ENCODE measurements at regions of chr2 and their contacts with region 1.

Region 1: GRCh38 chr2:215269397-215270119 is 42.3 kb upstream of the ATIC start:
- DNase-seq: peak; percentile 71
- ATAC-seq: no peak
- H3K4me3 Mint-ChIP-seq: no peak overlapping the region
- H3K27ac Mint-ChIP-seq: no peak overlapping the region
- H3K4me1 Mint-ChIP-seq: peaks cover 15% of the 10 kb centered on the region
- H3K27me3 Mint-ChIP-seq: peaks cover 3% of the 10 kb centered on the region

Region 2: DNA sequence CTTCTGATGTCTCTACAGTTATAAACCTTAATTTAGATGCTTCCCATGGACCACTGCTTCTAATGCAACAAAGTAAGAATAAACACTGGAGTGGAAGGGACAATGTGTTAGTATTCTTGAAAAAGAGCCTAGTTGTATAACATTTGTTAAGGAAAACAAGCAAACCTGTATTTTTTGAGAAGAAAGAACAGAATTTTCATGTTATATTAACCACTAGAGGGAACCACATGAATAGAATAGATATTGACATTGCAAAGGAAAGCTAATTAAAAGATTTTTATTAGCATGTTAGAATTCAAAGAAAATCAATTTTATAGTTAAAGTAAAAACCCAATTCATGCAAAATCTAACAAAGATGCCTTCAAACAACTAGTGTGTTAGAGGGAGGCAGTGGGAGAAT is 308.9 kb before region 1 on chr2:
- CTCF ChIA-PET with region 1: no interaction called
- POLR2A ChIA-PET with region 1: no interaction called
- intact Hi-C with region 1: loop called in 1 of 2 experiments (anchors 10 kb)
- DNase-seq: no peak
- ATAC-seq: no peak
- H3K4me3 Mint-ChIP-seq: no peak overlapping the region
- H3K27ac Mint-ChIP-seq: no peak overlapping the region
- H3K4me1 Mint-ChIP-seq: no peaks in the 10 kb centered on the region
- H3K27me3 Mint-ChIP-seq: peaks cover 7% of the 10 kb centered on the region

Region 3: DNA sequence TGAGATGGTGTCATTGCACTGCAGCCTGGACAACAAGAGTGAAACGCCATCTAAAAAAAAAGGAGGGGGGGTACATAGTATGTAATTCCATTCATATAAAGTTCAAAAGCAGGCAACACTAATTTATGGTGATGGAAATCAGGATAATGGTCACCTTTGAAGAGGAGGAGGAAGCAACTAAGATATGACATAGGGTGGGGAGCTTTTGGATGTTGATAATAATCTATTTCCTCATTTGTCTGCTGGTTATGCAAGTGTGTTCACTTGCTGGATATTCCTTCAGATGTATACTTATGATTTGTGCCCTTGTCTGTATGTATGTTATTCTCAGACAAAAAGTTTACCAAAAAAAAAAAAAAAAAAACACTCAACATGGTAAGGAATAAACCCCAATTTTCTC is 13.7 kb after region 1 on chr2:
- CTCF ChIA-PET with region 1: no interaction called
- POLR2A ChIA-PET with region 1: no interaction called
- intact Hi-C with region 1: no loop called
- DNase-seq: no peak
- ATAC-seq: no peak
- H3K4me3 Mint-ChIP-seq: no peak overlapping the region
- H3K27ac Mint-ChIP-seq: no peak overlapping the region
- H3K4me1 Mint-ChIP-seq: no peaks in the 10 kb centered on the region
- H3K27me3 Mint-ChIP-seq: peaks cover 2% of the 10 kb centered on the region

Region 4: DNA sequence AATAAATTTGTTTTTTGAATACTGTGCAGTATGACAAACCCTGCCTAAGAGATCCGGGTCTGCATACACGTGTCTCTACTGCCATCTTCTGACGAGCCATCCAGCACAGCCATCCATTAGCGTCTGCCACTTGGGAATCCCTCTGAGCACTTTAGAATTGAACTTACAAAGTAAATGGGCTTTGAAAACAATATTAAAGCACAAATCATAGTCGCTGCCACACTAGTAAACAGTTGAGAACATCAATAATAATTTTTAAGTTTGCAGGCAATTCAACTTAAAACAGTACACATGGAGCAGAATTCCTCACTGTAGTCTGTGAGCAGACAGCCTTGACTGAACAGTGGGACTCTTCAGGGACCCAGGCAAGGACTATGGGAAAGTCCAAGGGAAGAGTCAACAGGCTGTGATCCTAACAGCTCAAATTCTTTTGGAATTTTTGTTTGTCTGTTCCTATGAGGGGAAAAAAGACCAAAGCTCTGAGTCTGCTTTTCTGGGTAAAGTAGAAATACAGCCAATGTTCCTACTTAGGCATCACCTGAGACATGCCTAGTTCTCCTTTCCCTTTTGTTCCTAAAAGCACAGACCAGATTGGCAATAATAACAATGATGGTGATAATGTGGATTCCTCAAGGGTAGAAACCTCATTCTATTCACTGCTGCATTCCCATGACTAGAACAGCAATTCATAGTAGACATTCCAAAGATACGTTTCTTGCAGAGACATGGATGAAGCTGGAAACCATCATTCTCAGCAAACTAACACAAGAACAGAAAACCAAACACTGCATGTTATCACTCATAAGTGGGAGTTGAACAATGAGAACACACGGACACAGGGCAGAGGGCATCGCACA is 650.9 kb after region 1 on chr2:
- CTCF ChIA-PET with region 1: no interaction called
- POLR2A ChIA-PET with region 1: no interaction called
- intact Hi-C with region 1: loop called in 1 of 2 experiments (anchors 5 kb)
- DNase-seq: peak; percentile 76
- ATAC-seq: peak; percentile 85
- H3K4me3 Mint-ChIP-seq: no peak overlapping the region
- H3K27ac Mint-ChIP-seq: no peak overlapping the region
- H3K4me1 Mint-ChIP-seq: peaks cover 3% of the 10 kb centered on the region
- H3K27me3 Mint-ChIP-seq: peaks cover 2% of the 10 kb centered on the region

Measured in activated CD4-positive, alpha-beta T cell treated with anti-CD3 and anti-CD28 coated beads for 36 hours (primary cell).